Heart left ventricle (tissue), 16 donors: ENCODE measurements at regions of chr20 and their contacts with region 1.

Region 1: DNA sequence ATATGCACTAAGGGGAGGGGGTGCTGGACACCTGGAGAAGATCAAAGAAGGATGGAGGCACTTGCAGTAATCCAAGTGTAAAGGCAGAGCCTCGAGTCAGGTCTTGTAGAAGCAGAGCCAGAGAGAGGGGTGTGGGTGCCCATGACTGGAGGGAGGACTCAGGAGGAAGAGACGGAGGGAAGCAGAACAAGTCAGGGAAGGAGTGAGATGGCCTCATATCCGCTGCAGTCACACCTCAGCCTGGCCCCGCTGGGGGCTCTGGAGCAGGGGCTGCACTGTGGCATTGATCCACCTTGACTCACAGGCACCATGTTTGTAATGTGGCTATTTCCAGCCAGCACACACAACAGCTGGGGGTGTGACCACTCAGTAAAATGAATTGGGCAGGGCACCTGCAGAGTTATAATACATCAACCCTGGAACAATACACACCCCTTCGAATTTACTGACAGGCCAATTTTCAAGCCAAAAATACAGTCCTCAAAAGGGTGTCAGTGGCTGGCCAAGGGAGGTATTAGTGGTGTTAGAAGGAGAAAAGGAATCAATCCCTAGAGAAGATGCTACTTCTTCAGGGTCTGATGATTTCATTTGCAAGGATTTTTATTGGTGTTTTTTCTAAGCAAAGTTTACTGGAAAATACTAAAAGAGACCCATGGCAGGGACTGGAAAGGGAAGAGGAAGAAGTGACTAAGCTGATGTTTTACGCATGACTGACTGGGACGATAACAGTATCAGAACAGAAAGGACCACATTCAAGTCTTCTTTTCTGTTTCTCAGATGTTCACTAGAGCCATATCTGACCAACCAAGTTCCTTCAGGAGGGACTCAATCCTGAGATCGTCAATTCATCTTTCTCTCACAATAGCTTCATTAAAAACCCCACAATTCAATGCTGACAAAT is 18.9 kb upstream of the NXT1 start:
- DNase-seq: no peak
- ATAC-seq: peak in 1 of 4 donors; percentile 52
- H3K4me3 ChIP-seq: no peak overlapping the region
- H3K27ac ChIP-seq: no peak overlapping the region
- H3K4me1 ChIP-seq: peaks cover 0 to 14% (median 0%) of the 10 kb centered on the region in 12 donors
- H3K27me3 ChIP-seq: no peaks in the 10 kb centered on the region
- CTCF ChIP-seq: no peak
- POLR2A ChIP-seq: no peak

Region 2: DNA sequence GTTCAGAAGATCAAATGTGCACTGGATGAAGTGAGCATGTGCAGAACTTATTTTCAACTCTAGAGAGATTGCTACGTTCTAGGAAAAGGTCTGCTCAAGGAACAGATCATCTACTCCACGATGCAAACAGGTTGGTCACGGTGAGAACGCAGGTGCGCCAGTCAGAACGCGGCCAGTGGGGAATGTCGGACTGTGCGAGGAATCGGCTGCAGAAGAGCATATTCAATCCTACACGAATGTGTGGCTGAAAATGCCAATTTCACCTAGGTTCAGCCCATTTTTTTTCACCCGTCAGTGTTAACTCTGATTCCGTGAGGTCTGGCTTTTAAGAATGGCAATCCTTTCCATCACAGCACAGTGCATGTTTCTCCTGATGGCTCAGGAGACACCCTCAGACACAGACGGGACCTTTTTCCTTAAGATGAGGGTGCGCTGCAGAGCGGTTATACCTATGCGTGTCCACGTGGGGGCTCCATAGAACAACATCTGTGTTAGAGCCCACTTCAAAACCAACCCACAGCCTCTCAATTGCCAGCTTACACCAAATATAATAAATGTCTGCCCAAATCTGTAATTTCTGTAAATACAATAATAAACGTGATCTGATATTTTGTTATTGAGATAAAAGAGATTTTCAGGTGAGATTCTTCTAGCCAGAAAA is 997.7 kb before region 1 on chr20:
- intact Hi-C with region 1: loop called in 3 of 10 experiments (anchors 10 kb)
- DNase-seq: peak in 3 of 5 donors; percentile 34 to 44 (median 36)
- ATAC-seq: peak in 3 of 4 donors; percentile 64 to 80 (median 66)
- H3K4me3 ChIP-seq: no peak overlapping the region
- H3K27ac ChIP-seq: no peak overlapping the region
- H3K4me1 ChIP-seq: no peaks in the 10 kb centered on the region
- H3K27me3 ChIP-seq: peaks cover 0 to 82% (median 4%) of the 10 kb centered on the region in 9 donors
- CTCF ChIP-seq: peak; percentile 54 to 79 (median 66)
- POLR2A ChIP-seq: no peak

Region 3: GRCh38 chr20:22346716-22347115 is 985.0 kb before region 1 on chr20:
- intact Hi-C with region 1: loop called in 1 of 10 experiments (anchors 10 kb)
- DNase-seq: no peak
- ATAC-seq: no peak
- H3K4me3 ChIP-seq: no peak overlapping the region
- H3K27ac ChIP-seq: no peak overlapping the region
- H3K4me1 ChIP-seq: no peaks in the 10 kb centered on the region
- H3K27me3 ChIP-seq: peaks cover 0 to 55% (median 6%) of the 10 kb centered on the region in 9 donors
- CTCF ChIP-seq: no peak
- POLR2A ChIP-seq: no peak

Region 4: DNA sequence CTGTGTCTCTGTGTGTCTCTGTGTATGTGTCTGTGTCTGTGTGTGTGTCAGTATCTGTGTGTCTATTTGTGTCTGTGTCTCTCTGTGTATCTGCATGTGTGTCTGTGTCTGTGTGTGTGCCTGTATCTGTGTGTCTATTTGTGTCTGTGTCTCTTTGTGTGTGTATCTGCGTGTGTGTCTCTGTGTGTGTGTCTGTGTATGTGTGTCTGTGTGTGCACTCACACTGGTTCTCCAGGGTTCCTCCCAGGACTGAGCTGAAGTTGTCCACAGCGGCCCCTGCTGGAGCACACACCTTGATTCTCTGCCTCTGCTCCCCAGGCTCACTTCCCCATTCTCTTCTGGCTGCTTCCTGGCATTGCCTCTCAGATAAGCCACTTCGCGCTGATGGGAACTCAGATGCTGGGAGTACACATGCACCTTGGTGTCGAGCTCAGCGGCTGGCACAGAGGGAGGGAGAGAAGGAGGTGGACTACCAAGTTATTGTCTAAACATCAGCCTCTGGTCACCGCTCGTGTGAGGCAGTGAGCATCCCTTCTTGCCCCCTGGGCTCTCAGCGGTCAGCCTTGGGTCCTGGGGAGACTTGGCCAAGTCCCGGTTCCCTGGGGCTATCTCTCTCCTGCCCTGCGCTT is 86.0 kb before region 1 on chr20:
- intact Hi-C with region 1: loop called in 4 of 10 experiments (anchors 5 to 10 kb)
- DNase-seq: peak; percentile 67 to 80 (median 71)
- ATAC-seq: peak; percentile 40 to 83 (median 79)
- H3K4me3 ChIP-seq: no peak overlapping the region
- H3K27ac ChIP-seq: peak overlapping the region in 10 of 12 donors; percentile 23 to 75 (median 66)
- H3K4me1 ChIP-seq: peaks cover 0 to 37% (median 18%) of the 10 kb centered on the region in 12 donors
- H3K27me3 ChIP-seq: no peaks in the 10 kb centered on the region
- CTCF ChIP-seq: peak; percentile 42 to 69 (median 48)
- POLR2A ChIP-seq: no peak

Region 5: GRCh38 chr20:23257848-23258746 is 73.6 kb before region 1 on chr20:
- intact Hi-C with region 1: loop called in 1 of 10 experiments (anchors 5 kb)
- DNase-seq: peak in 1 of 5 donors; percentile 56
- ATAC-seq: peak; percentile 66 to 95 (median 86)
- H3K4me3 ChIP-seq: no peak overlapping the region
- H3K27ac ChIP-seq: peak overlapping the region; percentile 46 to 82 (median 66)
- H3K4me1 ChIP-seq: peaks cover 6 to 40% (median 24%) of the 10 kb centered on the region in 12 donors
- H3K27me3 ChIP-seq: no peaks in the 10 kb centered on the region
- CTCF ChIP-seq: no peak
- POLR2A ChIP-seq: no peak

Region 6: DNA sequence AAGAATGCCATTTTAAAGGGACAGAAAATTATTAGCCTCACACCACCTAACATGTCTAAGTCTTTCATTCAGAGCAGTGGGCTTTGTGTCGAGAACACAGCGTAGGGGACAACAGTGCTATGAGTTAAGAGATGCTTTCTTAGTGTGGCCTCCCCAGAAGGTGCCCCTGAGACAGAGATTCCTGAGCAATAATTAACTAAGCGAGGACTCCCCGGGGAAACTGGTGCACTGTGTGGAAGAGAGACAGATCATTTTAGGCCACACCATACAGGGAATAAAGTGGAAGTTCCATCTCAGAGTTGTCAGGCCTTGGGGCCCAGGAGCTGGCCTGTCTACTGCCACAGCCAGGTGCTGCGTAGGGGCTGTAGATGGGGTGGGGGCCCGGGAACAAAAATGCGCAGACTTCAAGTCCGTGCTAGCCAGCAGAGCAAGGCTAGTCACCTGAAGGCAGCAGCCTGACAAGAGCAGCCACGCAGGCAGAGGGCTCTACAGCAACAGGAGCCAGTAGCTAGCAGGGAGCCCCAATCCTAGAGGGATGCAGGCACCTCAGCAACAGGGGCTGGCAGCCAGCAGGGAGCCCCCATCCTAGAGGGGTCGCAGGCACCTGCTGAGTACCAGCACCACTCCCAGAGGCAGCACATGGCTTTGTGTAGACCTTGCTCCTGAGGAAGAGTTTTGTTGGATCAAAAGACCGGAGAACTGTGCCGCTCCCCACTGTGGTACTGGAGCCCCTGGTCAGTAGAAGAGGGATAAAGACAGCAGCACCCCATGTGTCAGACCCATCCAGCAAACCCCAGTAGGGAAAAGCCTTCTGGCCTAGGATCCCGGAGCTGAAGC is 44.1 kb before region 1 on chr20:
- intact Hi-C with region 1: loop called in 1 of 10 experiments (anchors 5 kb)
- DNase-seq: no peak
- ATAC-seq: no peak
- H3K4me3 ChIP-seq: no peak overlapping the region
- H3K27ac ChIP-seq: no peak overlapping the region
- H3K4me1 ChIP-seq: peaks cover 0 to 14% (median 4%) of the 10 kb centered on the region in 12 donors
- H3K27me3 ChIP-seq: no peaks in the 10 kb centered on the region
- CTCF ChIP-seq: no peak
- POLR2A ChIP-seq: no peak